A549 (cell line): ENCODE measurements at regions of chr20 and their contacts with region 1.

Region 1: DNA sequence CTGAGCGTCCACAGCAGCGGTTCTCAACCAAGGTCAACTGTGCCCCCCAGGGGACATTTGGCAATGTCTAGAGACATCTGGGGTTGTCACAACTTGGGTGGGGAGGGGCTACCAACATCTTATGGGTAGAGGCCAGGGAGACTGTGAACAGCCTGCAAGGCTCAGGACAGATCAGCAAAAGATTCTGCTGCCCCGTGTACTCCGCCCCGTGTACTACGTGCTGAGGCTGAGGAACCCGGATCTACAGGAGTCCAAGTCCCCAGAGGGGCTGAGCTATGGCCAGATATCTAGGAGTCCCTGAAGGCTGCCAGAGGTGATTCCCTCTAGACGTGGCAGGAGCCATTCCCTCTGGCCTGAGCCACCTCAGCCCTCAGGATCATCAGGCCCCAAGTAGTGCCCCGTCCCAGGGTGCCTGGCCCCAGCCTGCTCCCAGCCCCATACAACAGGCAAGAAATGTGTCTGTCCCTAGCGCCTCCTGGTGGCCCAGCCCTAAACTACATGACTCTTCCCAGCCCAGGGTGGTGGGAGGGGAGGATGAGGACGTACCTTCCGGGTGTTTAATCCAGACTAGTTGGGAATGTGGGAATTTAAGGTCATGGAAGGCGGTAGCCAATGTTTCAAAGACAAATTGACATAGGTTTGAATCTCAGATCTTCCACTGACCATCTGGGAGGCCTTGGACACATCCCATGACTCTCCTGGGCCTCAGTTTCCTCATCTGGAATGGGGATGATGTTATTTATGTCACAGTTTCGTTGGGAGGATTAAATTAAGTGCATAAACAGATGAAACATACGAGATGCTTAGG is 49.5 kb upstream of the PTPN1 start:
- DNase-seq: peak; percentile 86 to 95
- ATAC-seq: peak; percentile 83 to 94
- H3K4me3 ChIP-seq: no peak overlapping the region
- H3K27ac ChIP-seq: peak overlapping the region; percentile 91 to 94
- H3K4me1 ChIP-seq: peaks cover 62% of the 10 kb centered on the region
- CTCF ChIP-seq: peak; percentile 88
- EP300 ChIP-seq: no peak
- POLR2A ChIP-seq: no peak
- RAD21 ChIP-seq: peak; percentile 97 to 99

Region 2: GRCh38 chr20:50120897-50121693 is 339.6 kb before region 1 on chr20:
- CTCF ChIA-PET with region 1: interaction called, 31 read pairs
- POLR2A ChIA-PET with region 1: no interaction called
- DNase-seq: peak; percentile 79 to 82
- ATAC-seq: peak; percentile 89 to 91
- H3K4me3 ChIP-seq: no peak overlapping the region
- H3K27ac ChIP-seq: peak overlapping the region in 1 of 2 experiments; percentile 45; a peak in 3 of 6 replicates
- H3K4me1 ChIP-seq: peaks cover 11% of the 10 kb centered on the region
- CTCF ChIP-seq: peak; percentile 80
- EP300 ChIP-seq: no peak
- POLR2A ChIP-seq: no peak
- RAD21 ChIP-seq: peak; percentile 96 to 99

Region 3: GRCh38 chr20:50308513-50309279 is 152.0 kb before region 1 on chr20:
- CTCF ChIA-PET with region 1: interaction called, 10 read pairs
- POLR2A ChIA-PET with region 1: no interaction called
- DNase-seq: peak; percentile 90 to 98
- ATAC-seq: peak; percentile 81 to 85
- H3K4me3 ChIP-seq: peak overlapping the region; percentile 29
- H3K27ac ChIP-seq: peak overlapping the region; percentile 93 to 98
- H3K4me1 ChIP-seq: peaks cover 95% of the 10 kb centered on the region
- CTCF ChIP-seq: no peak
- EP300 ChIP-seq: peak; percentile 88 to 99; a peak in 4 of 5 replicates
- POLR2A ChIP-seq: peak; percentile 33
- RAD21 ChIP-seq: peak; percentile 25 to 82

Region 4: GRCh38 chr20:50395258-50395729 is 65.4 kb before region 1 on chr20:
- CTCF ChIA-PET with region 1: interaction called, 56 read pairs
- POLR2A ChIA-PET with region 1: no interaction called
- DNase-seq: no peak
- ATAC-seq: peak in 1 of 2 experiments; percentile 20; a peak in 1 of 6 replicates
- H3K4me3 ChIP-seq: no peak overlapping the region
- H3K27ac ChIP-seq: peak overlapping the region; percentile 67 to 81; a peak in 5 of 6 replicates
- H3K4me1 ChIP-seq: peaks cover 57% of the 10 kb centered on the region
- CTCF ChIP-seq: no peak
- EP300 ChIP-seq: no peak
- POLR2A ChIP-seq: no peak
- RAD21 ChIP-seq: no peak

Region 5: DNA sequence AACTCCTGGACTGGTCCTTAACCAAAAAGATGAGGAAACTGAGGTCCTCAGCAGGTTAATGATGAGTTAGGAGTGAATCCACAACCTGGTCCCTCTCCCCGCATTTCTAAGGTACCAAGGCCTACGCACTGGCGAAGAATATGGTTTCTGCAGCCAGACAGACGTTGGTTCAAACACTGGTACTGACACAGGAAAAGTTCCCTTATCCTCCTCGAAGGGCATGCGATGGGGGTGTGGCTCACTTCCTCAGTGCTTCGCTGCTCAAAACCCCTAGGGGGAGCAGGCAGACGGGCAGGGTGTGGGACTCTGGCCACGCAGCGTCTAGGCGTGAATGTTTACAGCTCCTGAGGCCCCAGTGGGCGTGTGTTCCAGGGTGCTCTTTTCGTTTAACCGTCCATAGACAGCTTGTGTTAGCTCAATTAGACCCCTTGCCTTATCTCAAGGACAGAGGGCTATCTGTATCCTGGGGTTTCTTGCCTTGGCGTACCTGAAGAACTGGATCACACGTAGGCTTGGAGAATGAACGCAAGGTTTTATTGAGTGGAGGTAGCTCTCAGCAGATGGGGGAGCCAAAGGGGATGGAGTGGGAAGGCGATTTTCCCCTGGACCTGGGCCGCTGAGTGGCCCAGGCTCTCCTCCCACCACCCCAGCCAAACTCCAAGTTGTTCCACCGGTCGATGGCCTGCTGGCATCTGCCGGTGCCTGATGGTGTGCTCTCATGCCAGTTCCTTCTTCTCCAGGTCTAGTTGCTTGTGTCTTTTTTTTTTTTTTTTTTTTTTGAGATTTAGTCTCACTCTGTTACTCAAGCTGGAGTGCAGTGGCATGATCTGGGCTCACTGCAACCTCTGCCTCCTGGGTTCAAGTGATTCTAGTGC is 17.7 kb after region 1 on chr20:
- CTCF ChIA-PET with region 1: interaction called, 15 read pairs
- POLR2A ChIA-PET with region 1: no interaction called
- DNase-seq: peak; percentile 64 to 73
- ATAC-seq: peak; percentile 94 to 99
- H3K4me3 ChIP-seq: no peak overlapping the region
- H3K27ac ChIP-seq: 0 out of 6 replicates have a peak overlapping the region, but pooled peaks of 1 of the 2 experiments have one; percentile 11
- H3K4me1 ChIP-seq: peaks cover 21% of the 10 kb centered on the region
- CTCF ChIP-seq: peak; percentile 45
- EP300 ChIP-seq: no peak
- POLR2A ChIP-seq: no peak
- RAD21 ChIP-seq: peak; percentile 41 to 63; a peak in 3 of 5 replicates

Region 6: GRCh38 chr20:50484276-50484976 is 23.8 kb after region 1 on chr20:
- CTCF ChIA-PET with region 1: interaction called, 15 read pairs
- POLR2A ChIA-PET with region 1: no interaction called
- DNase-seq: no peak
- ATAC-seq: no peak
- H3K4me3 ChIP-seq: no peak overlapping the region
- H3K27ac ChIP-seq: peak overlapping the region; percentile 62 to 82; a peak in 5 of 6 replicates
- H3K4me1 ChIP-seq: no peaks in the 10 kb centered on the region
- CTCF ChIP-seq: no peak
- EP300 ChIP-seq: no peak
- POLR2A ChIP-seq: no peak
- RAD21 ChIP-seq: no peak